ENCODE measurements at regions of chr1 and their contacts with region 1.

Region 1: DNA sequence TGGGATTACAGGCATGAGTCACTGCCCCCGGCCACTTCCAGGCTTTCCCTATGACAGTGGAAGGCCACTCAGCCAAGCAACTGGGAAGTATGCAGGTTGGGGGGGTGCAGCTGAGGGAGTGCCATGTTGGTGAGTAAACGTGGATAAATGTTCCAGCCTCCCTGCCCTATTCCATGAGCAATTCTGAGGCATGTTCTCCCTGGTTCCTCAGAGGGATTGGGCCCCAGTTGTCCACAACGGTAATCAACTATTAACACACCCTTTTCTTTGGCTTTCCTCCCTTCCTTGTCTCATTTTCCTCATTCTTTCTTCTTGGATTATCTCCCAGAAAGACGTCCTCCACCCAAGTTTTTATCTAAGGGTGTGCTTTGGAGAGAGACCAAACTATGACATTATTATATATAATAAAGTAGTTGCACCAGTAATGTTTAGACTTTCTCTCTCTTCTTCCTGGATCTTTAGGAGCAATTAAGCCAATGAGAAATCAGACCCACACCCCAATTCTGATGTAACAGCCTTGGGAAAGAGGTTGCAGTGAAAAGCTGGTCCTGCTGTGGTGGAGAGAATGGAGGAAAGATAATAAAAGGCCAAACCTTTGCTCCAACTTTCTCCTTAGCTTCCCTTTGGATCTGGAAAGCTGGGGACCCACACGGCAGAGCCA is 6.8 kb upstream of the SLAMF9 start:
- DNase-seq: peak; percentile 78 to 88
- H3K4me3 ChIP-seq: peak overlapping the region; percentile 38; the same call in 1 of the 2 replicates
- H3K27ac ChIP-seq: peak overlapping the region; percentile 66
- H3K4me1 ChIP-seq: peaks cover 30% of the 10 kb centered on the region
- H3K27me3 ChIP-seq: no peaks in the 10 kb centered on the region
- CTCF ChIP-seq: no peak

Region 2: DNA sequence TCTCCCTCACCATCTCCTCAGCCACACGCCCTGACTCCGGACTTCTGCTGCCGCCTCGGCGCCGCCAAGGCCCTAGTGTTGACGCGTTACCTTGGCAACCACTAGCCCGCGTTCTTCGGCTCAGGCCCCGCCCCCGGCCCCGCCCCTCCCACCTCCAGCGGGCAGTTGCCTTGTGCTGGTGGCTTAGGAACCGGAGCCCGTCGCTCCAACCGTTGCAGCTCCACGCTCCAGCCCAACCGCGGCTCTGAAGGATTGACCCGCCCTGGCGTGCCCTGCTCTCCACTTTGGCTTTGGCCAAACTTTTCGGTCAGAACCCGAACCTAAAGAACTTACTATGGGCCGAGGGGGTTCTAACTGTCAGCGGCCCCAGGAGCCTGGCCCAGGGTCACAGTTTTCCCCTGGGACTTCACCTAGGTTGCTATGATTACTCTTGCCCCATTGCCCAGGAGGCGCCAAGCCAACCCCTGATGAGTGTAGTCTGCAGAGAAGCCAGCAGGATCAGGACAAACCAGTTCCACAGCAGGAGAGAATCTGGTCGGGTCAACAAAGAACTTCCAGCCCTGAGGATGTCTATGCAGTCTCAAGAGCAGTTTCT is 60.7 kb before region 1 on chr1 and contains the start of gene CFAP45:
- CTCF ChIA-PET with region 1: no interaction called
- POLR2A ChIA-PET with region 1: no interaction called
- intact Hi-C with region 1: loop called (anchors 1 kb)
- DNase-seq: peak; percentile 87 to 94
- H3K4me3 ChIP-seq: peak within 1 kb of the TSS; percentile 53; the same call in 1 of the 2 replicates
- H3K27ac ChIP-seq: peak within 1 kb of the TSS; percentile 88
- H3K4me1 ChIP-seq: peaks cover 36% of the 10 kb centered on the region
- H3K27me3 ChIP-seq: no peaks in the 10 kb centered on the region
- CTCF ChIP-seq: no peak
- total RNA-seq, gene CFAP45: 8.2 and 9.3 TPM in 2 replicates

Region 3: GRCh38 chr1:159916184-159917051 is 44.4 kb before region 1 on chr1:
- CTCF ChIA-PET with region 1: no interaction called
- POLR2A ChIA-PET with region 1: no interaction called
- intact Hi-C with region 1: loop called (anchors 2 kb)
- DNase-seq: peak; percentile 84 to 98
- H3K4me3 ChIP-seq: no peak overlapping the region
- H3K27ac ChIP-seq: peak overlapping the region; percentile 79
- H3K4me1 ChIP-seq: peaks cover 99% of the 10 kb centered on the region
- H3K27me3 ChIP-seq: no peaks in the 10 kb centered on the region
- CTCF ChIP-seq: no peak

Region 4: DNA sequence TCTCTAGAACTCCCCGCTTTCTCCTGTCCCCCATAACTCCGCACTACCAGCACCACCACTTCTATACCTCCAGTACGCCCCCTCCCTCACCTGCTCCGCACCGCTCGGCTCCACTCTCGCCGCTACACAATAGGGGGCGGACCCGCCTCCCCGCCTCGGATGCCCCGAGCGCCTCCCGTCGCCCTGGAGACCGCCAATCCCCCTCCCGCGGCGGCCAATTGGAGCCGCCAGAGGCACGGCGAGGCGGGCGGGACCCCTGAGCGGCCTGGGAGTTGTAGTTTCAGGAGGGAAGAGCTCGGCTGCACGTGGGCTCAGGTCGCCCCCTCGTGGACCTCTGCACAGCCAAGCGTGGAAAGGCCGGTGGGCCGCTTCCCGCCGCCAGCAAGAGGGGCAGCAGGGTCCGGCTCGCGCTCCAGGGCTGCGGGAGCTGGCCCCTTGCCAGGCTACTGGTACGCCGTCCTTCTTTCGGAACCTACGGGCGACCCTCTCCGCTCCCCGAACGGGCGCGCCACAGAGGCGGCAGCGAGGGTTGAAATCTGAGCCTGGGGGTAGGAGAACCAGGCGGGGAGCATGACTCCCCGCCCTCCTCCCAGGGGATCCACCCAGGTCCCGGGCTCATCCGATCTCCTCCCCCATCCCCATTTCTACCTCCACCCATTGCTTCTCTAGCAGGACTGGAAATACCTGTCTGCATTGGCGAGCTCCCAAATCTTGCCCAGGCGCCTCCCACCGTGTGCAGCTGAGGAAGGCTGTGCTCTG is 15.2 kb before region 1 on chr1 and contains the start of gene IGSF9:
- CTCF ChIA-PET with region 1: interaction called, 4 read pairs
- POLR2A ChIA-PET with region 1: interaction called, 8 read pairs
- intact Hi-C with region 1: loop called (anchors 1 kb)
- DNase-seq: peak; percentile 90 to 94
- H3K4me3 ChIP-seq: peak within 1 kb of the TSS; percentile 76
- H3K27ac ChIP-seq: peak within 1 kb of the TSS; percentile 53
- H3K4me1 ChIP-seq: peaks cover 40% of the 10 kb centered on the region
- H3K27me3 ChIP-seq: no peaks in the 10 kb centered on the region
- CTCF ChIP-seq: peak; percentile 61
- total RNA-seq, gene IGSF9: 22.9 and 23.4 TPM in 2 replicates

Region 5: DNA sequence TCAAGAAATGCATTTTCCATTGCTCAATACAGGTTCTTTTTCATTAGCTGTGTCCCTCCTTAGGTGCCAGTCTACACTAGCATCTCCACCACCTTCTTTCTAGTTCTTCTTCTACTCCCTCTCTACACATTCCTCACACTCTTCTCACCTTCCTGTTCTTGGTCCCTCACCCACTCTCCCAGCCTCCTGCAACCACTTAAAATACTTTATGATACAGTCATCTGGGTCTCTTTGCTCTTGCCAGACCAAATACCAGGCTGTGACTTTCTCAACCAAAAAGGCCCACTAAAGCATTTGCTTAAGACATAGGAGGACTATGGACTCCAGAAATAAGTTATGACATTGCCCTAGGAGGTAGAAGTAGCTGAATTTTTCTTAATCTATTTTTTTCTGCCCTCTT is 35.8 kb after region 1 on chr1:
- CTCF ChIA-PET with region 1: no interaction called
- POLR2A ChIA-PET with region 1: no interaction called
- intact Hi-C with region 1: loop called (anchors 5 kb)
- DNase-seq: peak; percentile 37 to 86
- H3K4me3 ChIP-seq: no peak overlapping the region
- H3K27ac ChIP-seq: peak overlapping the region; percentile 25; the same call in 1 of the 2 replicates
- H3K4me1 ChIP-seq: peaks cover 28% of the 10 kb centered on the region
- H3K27me3 ChIP-seq: no peaks in the 10 kb centered on the region
- CTCF ChIP-seq: no peak

Region 6: DNA sequence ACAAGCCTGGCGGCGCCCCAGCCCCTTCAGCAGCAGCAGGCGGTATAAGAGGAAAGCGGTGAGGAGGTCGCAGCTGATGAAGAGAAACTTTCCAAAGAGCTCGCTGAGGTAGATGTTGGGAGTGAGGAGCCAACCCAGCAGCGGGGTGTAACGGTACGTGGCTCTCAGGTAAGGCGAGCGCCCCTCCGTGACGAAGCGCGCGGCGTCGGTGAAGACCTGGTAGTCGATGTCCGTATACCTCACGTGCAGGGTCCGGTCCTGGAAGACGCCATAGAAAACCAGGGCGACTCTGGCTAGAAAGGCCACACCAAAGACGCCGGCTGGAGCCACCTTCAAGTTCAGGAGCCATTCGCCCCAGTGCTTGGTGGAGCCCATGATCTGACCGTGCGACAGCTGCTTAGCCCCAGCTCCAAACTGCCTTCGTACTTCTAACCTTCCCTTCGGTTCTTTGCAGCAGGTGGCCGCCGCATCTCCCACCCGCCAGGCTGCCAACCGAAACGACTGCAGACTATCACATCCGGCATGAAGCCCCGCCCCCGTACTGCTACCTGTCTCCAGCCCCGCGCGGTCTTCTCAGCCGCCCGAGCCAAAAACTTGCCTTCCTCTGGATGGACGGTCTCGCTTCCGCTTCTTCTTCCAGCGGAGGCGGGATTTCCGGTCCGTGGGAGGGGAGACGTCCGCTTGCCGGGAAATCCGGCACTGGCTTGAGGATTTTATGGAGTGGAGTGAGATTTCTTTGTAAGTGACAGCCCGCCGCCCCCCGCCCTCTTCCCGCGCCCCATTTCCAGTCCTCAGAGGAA is 70.7 kb after region 1 on chr1 and contains the start of gene PIGM:
- CTCF ChIA-PET with region 1: no interaction called
- POLR2A ChIA-PET with region 1: no interaction called
- intact Hi-C with region 1: loop called (anchors 2 kb)
- DNase-seq: peak; percentile 94 to 95
- H3K4me3 ChIP-seq: peak within 1 kb of the TSS; percentile 83
- H3K27ac ChIP-seq: peak within 1 kb of the TSS; percentile 37; the same call in 1 of the 2 replicates
- H3K4me1 ChIP-seq: peaks cover 19% of the 10 kb centered on the region
- H3K27me3 ChIP-seq: no peaks in the 10 kb centered on the region
- CTCF ChIP-seq: no peak
- total RNA-seq, gene PIGM: 3.3 and 4.0 TPM in 2 replicates